ENCODE measurements at regions of chr10 and their contacts with region 1.

Region 1: DNA sequence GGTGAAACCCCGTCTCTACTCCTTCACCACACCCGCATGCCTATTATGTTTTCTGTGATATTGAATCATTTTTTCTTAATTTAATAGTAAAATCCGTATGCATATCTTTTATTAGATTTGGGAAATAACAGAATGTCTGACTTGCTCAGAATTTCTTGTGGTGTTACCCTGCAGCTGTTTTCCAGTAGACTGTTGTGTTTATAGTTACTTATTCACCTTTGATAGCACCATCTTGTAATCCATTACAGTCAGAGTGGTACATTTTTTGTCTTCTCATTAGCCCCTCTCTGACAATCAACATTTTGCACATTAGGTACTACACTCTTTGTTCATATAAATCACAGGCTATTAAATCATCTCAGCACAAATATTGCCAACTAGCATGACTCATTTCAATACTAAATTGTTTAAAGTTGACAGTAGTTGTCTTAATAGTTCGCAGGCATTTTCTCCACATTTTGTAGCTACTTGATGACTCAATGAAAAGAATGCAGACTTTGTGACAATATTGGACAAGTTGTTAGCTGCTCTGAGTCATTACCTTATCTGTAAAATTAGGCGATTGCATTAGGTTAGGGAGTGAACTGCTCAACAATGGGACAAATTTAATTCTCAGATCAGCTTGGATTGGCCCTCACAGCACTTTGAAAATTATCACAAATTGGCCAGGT is 17.8 kb upstream of the SLC16A12 start:
- DNase-seq: peak; percentile 92
- ATAC-seq: peak; percentile 69
- H3K4me3 ChIP-seq: no peak overlapping the region
- H3K27ac ChIP-seq: peak overlapping the region; percentile 85
- H3K4me1 ChIP-seq: peaks cover 48% of the 10 kb centered on the region
- H3K27me3 ChIP-seq: no peaks in the 10 kb centered on the region
- CTCF ChIP-seq: no peak

Region 2: DNA sequence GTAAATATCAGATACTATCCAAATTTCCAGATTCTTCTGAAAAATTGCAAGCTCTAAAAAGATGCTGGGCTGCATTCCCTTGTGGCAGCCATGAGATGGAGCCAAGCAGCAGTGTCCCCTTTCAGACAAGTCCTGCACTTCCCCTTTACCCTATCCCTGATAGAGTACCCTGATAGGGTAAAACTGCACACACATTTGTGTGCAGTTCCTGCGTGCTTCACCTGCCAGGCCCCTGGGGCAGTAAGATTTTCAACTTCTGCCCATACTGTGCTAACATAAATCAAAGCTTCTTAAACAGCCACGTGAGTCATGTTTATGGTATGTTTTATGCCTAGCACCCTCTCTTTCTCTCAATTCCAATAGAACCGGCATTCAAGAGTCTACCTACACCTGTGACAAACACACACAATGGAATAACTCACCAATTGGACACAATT is 86.6 kb before region 1 on chr10:
- CTCF ChIA-PET with region 1: interaction called, 6 read pairs
- POLR2A ChIA-PET with region 1: no interaction called
- intact Hi-C with region 1: loop called (anchors 2 kb)
- DNase-seq: peak; percentile 93
- ATAC-seq: peak; percentile 94
- H3K4me3 ChIP-seq: no peak overlapping the region; the same call in 1 of the 2 replicates
- H3K27ac ChIP-seq: 0 out of 2 replicates have a peak overlapping the region, but pooled peaks have one; percentile 16
- H3K4me1 ChIP-seq: peaks cover 32% of the 10 kb centered on the region
- H3K27me3 ChIP-seq: no peaks in the 10 kb centered on the region
- CTCF ChIP-seq: peak; percentile 72

Region 3: DNA sequence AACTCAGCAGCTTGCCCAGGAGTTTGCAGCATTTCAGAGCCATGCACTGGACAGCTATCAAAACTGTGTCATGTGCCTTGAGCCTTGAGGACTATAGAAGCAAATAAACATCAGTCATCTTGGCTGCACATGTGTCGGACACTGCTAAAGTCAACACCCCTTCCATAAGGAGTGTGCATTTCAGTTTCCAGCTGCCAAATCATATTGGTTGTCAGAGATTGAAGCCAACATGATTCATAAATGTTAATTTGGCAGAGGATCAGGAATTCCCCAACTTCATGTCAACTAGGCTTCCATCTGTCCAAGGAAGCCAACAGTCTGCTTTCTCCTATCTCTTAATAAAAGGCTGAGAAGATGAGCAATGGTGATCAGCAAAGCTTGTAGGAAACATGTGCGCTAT is 50.6 kb before region 1 on chr10:
- CTCF ChIA-PET with region 1: no interaction called
- POLR2A ChIA-PET with region 1: no interaction called
- intact Hi-C with region 1: loop called (anchors 2 kb)
- DNase-seq: peak; percentile 65
- ATAC-seq: peak; percentile 96
- H3K4me3 ChIP-seq: no peak overlapping the region
- H3K27ac ChIP-seq: no peak overlapping the region
- H3K4me1 ChIP-seq: 0 out of 2 replicates have a peak, but pooled peaks cover 10% of the 10 kb centered on the region
- H3K27me3 ChIP-seq: no peaks in the 10 kb centered on the region
- CTCF ChIP-seq: no peak

Region 4: DNA sequence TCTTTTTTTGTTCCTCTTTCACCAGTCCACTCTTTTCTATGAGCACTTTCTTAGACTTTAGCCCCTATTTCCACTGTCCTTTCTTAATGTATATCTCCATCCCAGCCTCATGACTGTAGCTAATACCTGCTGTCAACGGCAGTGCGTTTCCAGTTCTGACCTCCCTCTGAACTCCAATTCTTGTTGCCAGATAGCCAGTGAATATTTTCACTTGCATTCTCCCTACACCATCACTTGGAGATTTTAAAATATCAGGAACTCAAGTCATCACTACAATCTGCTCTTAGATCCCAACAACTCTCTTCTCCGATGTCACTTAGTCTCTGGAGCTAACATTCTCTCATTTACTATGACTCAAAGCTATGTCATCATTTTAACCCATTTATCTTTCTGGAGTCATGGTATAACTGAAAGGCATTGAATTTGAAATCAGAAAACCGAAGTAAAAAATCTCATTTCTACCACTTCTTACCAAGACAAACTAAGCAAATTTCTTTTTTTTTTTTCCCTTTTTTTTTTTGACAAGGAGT is 12.7 kb before region 1 on chr10:
- CTCF ChIA-PET with region 1: no interaction called
- POLR2A ChIA-PET with region 1: interaction called, 18 read pairs
- intact Hi-C with region 1: no loop called
- DNase-seq: peak; percentile 34
- ATAC-seq: 0 out of 2 replicates have a peak, but pooled peaks have one; percentile 22
- H3K4me3 ChIP-seq: no peak overlapping the region
- H3K27ac ChIP-seq: no peak overlapping the region
- H3K4me1 ChIP-seq: 0 out of 2 replicates have a peak, but pooled peaks cover 3% of the 10 kb centered on the region
- H3K27me3 ChIP-seq: no peaks in the 10 kb centered on the region
- CTCF ChIP-seq: no peak

Region 5: GRCh38 chr10:89699565-89700064 is 146.4 kb after region 1 on chr10:
- CTCF ChIA-PET with region 1: no interaction called
- POLR2A ChIA-PET with region 1: no interaction called
- intact Hi-C with region 1: no loop called
- DNase-seq: peak; percentile 10
- ATAC-seq: no peak
- H3K4me3 ChIP-seq: no peak overlapping the region
- H3K27ac ChIP-seq: no peak overlapping the region
- H3K4me1 ChIP-seq: peaks cover 19% of the 10 kb centered on the region
- H3K27me3 ChIP-seq: no peaks in the 10 kb centered on the region
- CTCF ChIP-seq: no peak

Measured in PC-3 (cell line).